CD8-positive, alpha-beta T cell (primary cell): ENCODE measurements at regions of chr10 and their contacts with region 1.

Region 1: DNA sequence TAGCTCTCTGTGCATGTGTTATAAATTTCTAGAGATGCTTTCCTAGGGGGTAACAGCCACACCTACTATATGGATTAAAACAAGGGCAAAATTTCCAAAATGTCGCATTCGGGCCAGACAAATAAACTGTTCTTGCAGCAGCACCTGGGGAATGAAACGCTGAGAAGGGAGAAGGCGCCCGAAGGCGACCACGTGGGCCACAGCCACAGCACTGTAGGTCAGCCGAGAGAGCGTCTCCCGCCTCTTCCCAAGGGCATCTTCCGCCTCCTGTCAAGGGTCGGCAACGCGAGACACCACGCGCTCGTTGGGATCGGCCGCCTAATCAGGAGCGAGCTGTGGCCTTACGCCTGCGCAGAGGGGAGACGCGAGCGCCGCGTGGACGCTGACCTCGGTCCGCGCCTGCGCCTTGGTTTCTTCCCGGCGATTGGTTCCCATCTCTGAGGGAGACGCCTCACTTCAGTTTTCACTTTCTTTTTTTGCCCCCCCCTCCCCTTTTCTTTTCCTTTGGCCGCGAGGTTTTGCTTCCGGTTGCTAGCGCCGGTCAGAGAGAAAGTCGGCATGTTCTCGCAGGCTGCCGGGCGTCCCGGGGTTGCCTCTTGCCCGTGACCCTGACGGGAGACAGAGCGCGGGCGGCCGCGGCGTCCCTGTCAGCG is at the start of gene TASOR2:
- DNase-seq: peak; percentile 86 to 98 (median 97)
- ATAC-seq: peak; percentile 88
- H3K4me3 ChIP-seq: peak within 1 kb of the TSS; percentile 76 to 88
- H3K4me3 Mint-ChIP-seq: peak within 1 kb of the TSS; percentile 92
- H3K27ac ChIP-seq: peak within 1 kb of the TSS; percentile 85
- H3K27ac Mint-ChIP-seq: peak within 1 kb of the TSS; percentile 96
- H3K4me1 ChIP-seq: peaks cover 37% of the 10 kb centered on the region
- H3K4me1 Mint-ChIP-seq: peaks cover 43% of the 10 kb centered on the region
- H3K27me3 ChIP-seq: no peaks in the 10 kb centered on the region
- H3K27me3 Mint-ChIP-seq: no peaks in the 10 kb centered on the region
- CTCF ChIP-seq: no peak
- total RNA-seq, gene TASOR2: 52.7 to 61.2 TPM

Region 2: GRCh38 chr10:3776796-3777571 is 1907.5 kb before region 1 on chr10:
- CTCF ChIA-PET with region 1: no interaction called
- POLR2A ChIA-PET with region 1: interaction called, 3 read pairs
- intact Hi-C with region 1: loop called in 1 of 2 experiments (anchors 10 kb)
- DNase-seq: peak in 7 of 9 experiments; percentile 41 to 82 (median 55)
- ATAC-seq: peak; percentile 57
- H3K4me3 ChIP-seq: no peak overlapping the region
- H3K4me3 Mint-ChIP-seq: peak overlapping the region; percentile 3
- H3K27ac ChIP-seq: peak overlapping the region; percentile 36 to 93
- H3K27ac Mint-ChIP-seq: peak overlapping the region; percentile 72
- H3K4me1 ChIP-seq: peaks cover 58% of the 10 kb centered on the region
- H3K4me1 Mint-ChIP-seq: peaks cover 61% of the 10 kb centered on the region
- H3K27me3 ChIP-seq: no peaks in the 10 kb centered on the region
- H3K27me3 Mint-ChIP-seq: no peaks in the 10 kb centered on the region
- CTCF ChIP-seq: no peak

Region 3: DNA sequence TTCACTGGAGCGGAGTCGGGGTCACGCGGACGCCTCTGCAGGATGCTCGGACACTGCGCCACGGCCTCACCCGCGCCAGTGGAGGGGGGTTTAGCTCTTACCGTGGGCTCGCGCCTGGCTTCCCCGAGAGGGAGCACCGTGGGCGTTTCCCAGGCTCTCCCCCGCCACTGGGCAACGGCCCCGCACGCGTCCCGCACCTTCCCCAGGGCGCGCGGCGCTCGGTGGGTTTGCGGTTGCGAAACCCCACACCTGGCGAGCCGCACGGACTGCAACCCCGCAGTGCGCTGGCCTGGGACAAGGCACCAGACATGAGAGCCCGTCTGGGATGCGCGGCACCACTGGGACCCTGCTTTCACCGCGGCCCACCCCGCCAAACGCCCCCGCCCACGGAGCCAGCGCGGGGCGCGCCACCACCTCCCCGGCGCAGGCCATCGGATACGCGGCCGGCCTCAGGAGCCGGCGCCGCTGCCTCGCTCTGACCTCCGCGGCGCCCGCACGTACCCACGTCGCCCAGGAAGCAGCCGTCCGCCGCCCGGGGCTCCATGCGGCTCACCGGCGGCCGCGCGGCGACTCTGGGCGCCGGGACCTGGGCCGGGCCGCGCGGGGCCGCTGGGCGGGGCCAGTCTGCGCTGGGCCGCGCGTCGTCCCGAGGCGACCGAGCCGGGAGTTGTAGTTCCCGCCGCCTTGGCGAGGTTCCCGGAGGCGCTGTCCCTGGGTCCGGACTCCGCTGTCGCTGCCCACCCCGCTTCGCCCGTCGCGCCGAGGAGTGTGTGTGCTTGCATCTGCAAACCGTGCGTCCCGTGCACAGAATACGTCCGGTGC is 18.2 kb before region 1 on chr10 and contains the start of gene ASB13:
- CTCF ChIA-PET with region 1: interaction called, 3 read pairs
- POLR2A ChIA-PET with region 1: interaction called, 3 read pairs
- intact Hi-C with region 1: loop called in 1 of 2 experiments (anchors 1 kb)
- DNase-seq: peak in 6 of 9 experiments; percentile 24 to 67 (median 45)
- ATAC-seq: peak; percentile 80
- H3K4me3 ChIP-seq: peak within 1 kb of the TSS; percentile 53 to 65
- H3K4me3 Mint-ChIP-seq: peak within 1 kb of the TSS; percentile 93
- H3K27ac ChIP-seq: no peak within 1 kb of the TSS
- H3K27ac Mint-ChIP-seq: peak within 1 kb of the TSS; percentile 55
- H3K4me1 ChIP-seq: peaks cover 9% of the 10 kb centered on the region
- H3K4me1 Mint-ChIP-seq: peaks cover 23% of the 10 kb centered on the region
- H3K27me3 ChIP-seq: no peaks in the 10 kb centered on the region
- H3K27me3 Mint-ChIP-seq: no peaks in the 10 kb centered on the region
- CTCF ChIP-seq: no peak
- total RNA-seq, gene ASB13: 1.6 to 1.9 TPM

Region 4: GRCh38 chr10:5776136-5776880 is 91.9 kb after region 1 on chr10:
- CTCF ChIA-PET with region 1: no interaction called
- POLR2A ChIA-PET with region 1: no interaction called
- intact Hi-C with region 1: loop called in 1 of 2 experiments (anchors 1 kb)
- DNase-seq: no peak
- ATAC-seq: no peak
- H3K4me3 ChIP-seq: peak overlapping the region in 1 of 2 experiments; percentile 24
- H3K4me3 Mint-ChIP-seq: peak overlapping the region; percentile 73
- H3K27ac ChIP-seq: peak overlapping the region; percentile 54 to 56
- H3K27ac Mint-ChIP-seq: peak overlapping the region; percentile 97
- H3K4me1 ChIP-seq: peaks cover 18% of the 10 kb centered on the region
- H3K4me1 Mint-ChIP-seq: peaks cover 66% of the 10 kb centered on the region
- H3K27me3 ChIP-seq: no peaks in the 10 kb centered on the region
- H3K27me3 Mint-ChIP-seq: no peaks in the 10 kb centered on the region
- CTCF ChIP-seq: no peak

Region 5: DNA sequence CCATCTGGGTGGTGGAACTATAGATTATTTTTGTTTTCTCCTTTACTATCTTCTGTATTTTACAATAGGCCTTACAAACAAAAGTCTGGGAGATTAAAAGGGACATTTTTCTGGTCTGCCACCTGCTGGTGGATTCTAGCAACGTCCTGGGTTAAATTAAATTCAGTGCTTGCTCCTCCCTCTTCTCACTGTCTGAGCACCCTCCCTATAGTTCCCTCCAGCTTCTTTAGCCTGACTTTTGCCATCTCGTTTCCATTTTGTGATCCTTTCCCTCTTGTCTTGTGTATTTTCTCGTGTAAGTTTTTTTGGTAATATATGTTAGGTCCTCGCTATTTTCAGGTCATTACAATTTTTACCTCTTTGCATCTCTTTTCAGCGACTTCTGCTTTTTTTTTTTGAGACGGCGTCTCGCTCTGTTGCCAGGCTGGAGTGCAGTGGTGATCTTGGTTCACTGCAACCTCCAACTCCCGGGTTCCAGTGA is 189.1 kb after region 1 on chr10:
- CTCF ChIA-PET with region 1: interaction called, 3 read pairs
- POLR2A ChIA-PET with region 1: no interaction called
- intact Hi-C with region 1: loop called (anchors 1 to 5 kb)
- DNase-seq: peak; percentile 45 to 77 (median 66)
- ATAC-seq: peak; percentile 99
- H3K4me3 ChIP-seq: no peak overlapping the region
- H3K4me3 Mint-ChIP-seq: peak overlapping the region; percentile 50
- H3K27ac ChIP-seq: no peak overlapping the region
- H3K27ac Mint-ChIP-seq: no peak overlapping the region
- H3K4me1 ChIP-seq: no peaks in the 10 kb centered on the region
- H3K4me1 Mint-ChIP-seq: peaks cover 2% of the 10 kb centered on the region
- H3K27me3 ChIP-seq: no peaks in the 10 kb centered on the region
- H3K27me3 Mint-ChIP-seq: no peaks in the 10 kb centered on the region
- CTCF ChIP-seq: peak; percentile 68

Region 6: DNA sequence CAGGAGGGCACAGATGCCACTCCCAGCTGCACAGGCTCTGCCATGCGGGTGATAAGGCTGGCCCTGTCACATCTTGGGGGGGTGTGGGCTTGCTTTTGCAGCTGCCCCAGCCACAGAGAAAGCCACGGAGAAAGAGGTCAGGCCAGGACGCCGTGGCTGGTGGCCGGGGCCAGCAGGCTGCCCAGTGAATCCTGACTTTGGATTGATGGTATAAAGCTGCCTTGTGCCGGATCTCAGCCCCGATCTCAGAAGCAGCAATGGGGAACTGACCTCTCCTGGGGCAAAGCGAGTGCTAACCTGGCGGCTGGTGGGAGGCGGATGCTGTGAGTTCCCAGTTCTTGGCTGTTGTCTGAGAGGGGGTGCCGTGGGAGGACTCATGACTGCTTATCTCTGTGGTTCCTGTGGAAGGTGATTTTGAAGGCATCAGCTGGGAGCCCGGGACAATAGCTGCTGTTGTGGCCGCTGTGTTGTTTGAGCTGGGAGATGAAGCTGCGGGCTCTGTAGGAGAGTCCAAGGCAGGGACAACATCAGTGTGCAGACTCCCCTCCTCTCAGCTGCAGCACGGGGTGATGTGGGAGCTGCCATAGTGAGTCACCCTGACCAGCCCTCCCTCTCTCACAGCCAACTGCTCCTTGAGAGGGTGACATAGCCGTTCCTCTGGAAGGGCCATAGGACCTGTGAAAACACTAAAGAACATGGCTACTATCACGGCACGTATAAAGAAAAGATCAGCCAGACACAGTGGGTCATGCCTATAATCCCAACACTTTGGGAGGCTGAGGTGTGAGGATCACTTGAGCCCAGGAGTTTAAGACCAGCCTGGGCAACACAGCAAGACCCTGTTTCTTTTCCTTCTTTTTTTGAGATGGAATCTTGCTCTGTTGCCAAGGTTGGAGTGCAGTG is 275.9 kb after region 1 on chr10:
- CTCF ChIA-PET with region 1: no interaction called
- POLR2A ChIA-PET with region 1: no interaction called
- intact Hi-C with region 1: no loop called
- DNase-seq: no peak
- ATAC-seq: no peak
- H3K4me3 ChIP-seq: no peak overlapping the region
- H3K4me3 Mint-ChIP-seq: no peak overlapping the region
- H3K27ac ChIP-seq: no peak overlapping the region
- H3K27ac Mint-ChIP-seq: peak overlapping the region; percentile 57
- H3K4me1 ChIP-seq: no peaks in the 10 kb centered on the region
- H3K4me1 Mint-ChIP-seq: no peaks in the 10 kb centered on the region
- H3K27me3 ChIP-seq: no peaks in the 10 kb centered on the region
- H3K27me3 Mint-ChIP-seq: no peaks in the 10 kb centered on the region
- CTCF ChIP-seq: no peak

Region 7: GRCh38 chr10:5977471-5978229 is 293.2 kb after region 1 on chr10 and contains the start of gene IL15RA:
- CTCF ChIA-PET with region 1: no interaction called
- POLR2A ChIA-PET with region 1: no interaction called
- intact Hi-C with region 1: loop called (anchors 2 to 10 kb)
- DNase-seq: peak; percentile 54 to 91 (median 84)
- ATAC-seq: peak; percentile 78
- H3K4me3 ChIP-seq: peak within 1 kb of the TSS; percentile 92 to 95
- H3K4me3 Mint-ChIP-seq: peak within 1 kb of the TSS; percentile 97
- H3K27ac ChIP-seq: peak within 1 kb of the TSS; percentile 77 to 82
- H3K27ac Mint-ChIP-seq: peak within 1 kb of the TSS; percentile 96
- H3K4me1 ChIP-seq: peaks cover 12% of the 10 kb centered on the region
- H3K4me1 Mint-ChIP-seq: peaks cover 24% of the 10 kb centered on the region
- H3K27me3 ChIP-seq: no peaks in the 10 kb centered on the region
- H3K27me3 Mint-ChIP-seq: no peaks in the 10 kb centered on the region
- CTCF ChIP-seq: no peak
- total RNA-seq, gene IL15RA: 4.8 to 5.4 TPM